Activated CD8-positive, alpha-beta T cell treated with anti-CD3 and anti-CD28 coated beads, Interleukin-2, amount 10 ng/mL, durations not matched to agents 7 days and 5 days (primary cell): ENCODE measurements at regions of chr2 and their contacts with region 1.

Region 1: GRCh38 chr2:201118121-201118960 is 2.4 kb downstream of the CFLAR start:
- DNase-seq: peak; percentile 93
- ATAC-seq: peak; percentile 45
- H3K4me3 Mint-ChIP-seq: peak overlapping the region; percentile 97
- H3K27ac Mint-ChIP-seq: peak overlapping the region; percentile 99
- H3K4me1 Mint-ChIP-seq: peaks cover 56% of the 10 kb centered on the region
- H3K27me3 Mint-ChIP-seq: no peaks in the 10 kb centered on the region

Region 2: GRCh38 chr2:200901459-200902072 is 216.8 kb before region 1 on chr2:
- CTCF ChIA-PET with region 1: interaction called, 10 read pairs
- POLR2A ChIA-PET with region 1: interaction called, 9 read pairs
- DNase-seq: peak; percentile 89
- ATAC-seq: peak; percentile 100
- H3K4me3 Mint-ChIP-seq: no peak overlapping the region
- H3K27ac Mint-ChIP-seq: peak overlapping the region; percentile 25
- H3K4me1 Mint-ChIP-seq: peaks cover 24% of the 10 kb centered on the region
- H3K27me3 Mint-ChIP-seq: no peaks in the 10 kb centered on the region

Region 3: DNA sequence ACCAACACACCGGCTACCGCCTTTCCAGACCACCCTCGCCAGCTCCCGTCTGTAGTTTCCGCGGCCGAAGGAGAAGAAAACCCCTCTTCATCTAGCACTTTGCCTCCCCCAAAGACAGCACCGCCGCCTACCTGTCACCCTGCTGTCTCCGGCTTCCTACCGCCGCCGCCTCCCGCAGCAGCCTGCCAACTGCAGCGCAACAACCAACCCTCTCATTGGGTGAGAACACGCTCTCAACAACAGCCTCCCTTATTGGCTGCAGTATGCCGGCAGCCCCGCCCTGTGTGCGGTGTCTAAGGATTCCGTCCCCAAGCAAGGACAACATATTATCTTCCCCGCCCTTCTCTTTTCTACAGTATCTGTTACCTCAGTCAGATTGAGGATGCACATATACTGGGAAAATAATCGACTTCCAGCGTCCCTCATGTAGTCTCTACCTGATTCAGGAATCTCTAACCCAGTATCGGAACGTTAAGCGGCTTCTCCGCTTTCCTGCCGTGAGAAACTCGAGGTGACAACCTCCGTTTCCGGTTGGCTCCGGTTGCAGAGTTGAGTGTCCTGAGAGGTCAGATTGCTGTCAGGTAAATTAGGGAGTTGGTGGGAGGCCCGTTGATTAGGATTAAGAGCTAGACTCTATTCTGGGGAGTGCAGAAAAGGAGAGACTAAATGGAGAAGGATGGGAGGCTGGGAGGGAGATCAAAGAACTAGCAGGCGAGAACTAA is 46.7 kb before region 1 on chr2 and contains the starts of genes HYCC2 and NDUFB3:
- CTCF ChIA-PET with region 1: no interaction called
- POLR2A ChIA-PET with region 1: interaction called, 70 read pairs
- DNase-seq: peak; percentile 96
- ATAC-seq: peak; percentile 97
- H3K4me3 Mint-ChIP-seq: peak within 1 kb of the TSS; percentile 89
- H3K27ac Mint-ChIP-seq: peak within 1 kb of the TSS; percentile 88
- H3K4me1 Mint-ChIP-seq: peaks cover 46% of the 10 kb centered on the region
- H3K27me3 Mint-ChIP-seq: no peaks in the 10 kb centered on the region
- total RNA-seq, gene HYCC2: 35.9 to 40.2 TPM
- total RNA-seq, gene NDUFB3: 167 to 173 TPM

Region 4: DNA sequence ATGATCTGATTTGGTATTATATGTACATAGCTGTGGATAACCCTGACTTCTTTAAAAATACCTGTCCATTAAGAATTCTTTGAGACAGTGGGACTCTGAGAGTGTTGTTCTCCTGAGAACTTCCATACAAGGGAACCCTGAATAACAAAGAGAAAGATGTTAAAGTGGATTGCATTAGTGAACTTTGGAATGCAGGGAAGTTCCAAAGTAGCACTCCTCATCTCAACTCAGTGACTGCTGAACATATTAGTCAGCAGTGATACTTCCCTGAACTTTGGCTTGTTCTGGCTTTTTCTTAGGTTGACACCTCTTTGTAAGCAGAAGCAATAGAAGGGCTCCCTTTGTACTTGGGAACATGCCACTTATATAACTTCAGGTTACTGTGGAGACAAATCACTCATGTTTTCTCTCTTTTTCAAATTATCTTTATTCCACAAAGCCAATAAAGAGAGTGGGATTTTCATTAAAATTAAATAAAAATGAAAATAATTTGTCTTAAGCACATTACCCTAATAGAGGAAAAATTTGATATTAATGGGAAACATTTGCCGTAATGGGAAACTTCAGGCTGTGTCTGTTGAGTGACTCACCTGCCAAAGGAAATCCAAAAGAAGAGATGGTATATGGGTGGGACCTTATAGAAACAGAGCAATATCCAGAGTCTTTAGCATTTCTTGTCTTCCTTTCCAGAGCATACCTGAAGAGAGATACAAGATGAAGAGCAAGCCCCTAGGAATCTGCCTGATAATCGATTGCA is 30.9 kb after region 1 on chr2:
- CTCF ChIA-PET with region 1: interaction called, 16 read pairs
- POLR2A ChIA-PET with region 1: interaction called, 13 read pairs
- DNase-seq: no peak
- ATAC-seq: no peak
- H3K4me3 Mint-ChIP-seq: no peak overlapping the region
- H3K27ac Mint-ChIP-seq: peak overlapping the region; percentile 7
- H3K4me1 Mint-ChIP-seq: peaks cover 20% of the 10 kb centered on the region
- H3K27me3 Mint-ChIP-seq: no peaks in the 10 kb centered on the region

Region 5: DNA sequence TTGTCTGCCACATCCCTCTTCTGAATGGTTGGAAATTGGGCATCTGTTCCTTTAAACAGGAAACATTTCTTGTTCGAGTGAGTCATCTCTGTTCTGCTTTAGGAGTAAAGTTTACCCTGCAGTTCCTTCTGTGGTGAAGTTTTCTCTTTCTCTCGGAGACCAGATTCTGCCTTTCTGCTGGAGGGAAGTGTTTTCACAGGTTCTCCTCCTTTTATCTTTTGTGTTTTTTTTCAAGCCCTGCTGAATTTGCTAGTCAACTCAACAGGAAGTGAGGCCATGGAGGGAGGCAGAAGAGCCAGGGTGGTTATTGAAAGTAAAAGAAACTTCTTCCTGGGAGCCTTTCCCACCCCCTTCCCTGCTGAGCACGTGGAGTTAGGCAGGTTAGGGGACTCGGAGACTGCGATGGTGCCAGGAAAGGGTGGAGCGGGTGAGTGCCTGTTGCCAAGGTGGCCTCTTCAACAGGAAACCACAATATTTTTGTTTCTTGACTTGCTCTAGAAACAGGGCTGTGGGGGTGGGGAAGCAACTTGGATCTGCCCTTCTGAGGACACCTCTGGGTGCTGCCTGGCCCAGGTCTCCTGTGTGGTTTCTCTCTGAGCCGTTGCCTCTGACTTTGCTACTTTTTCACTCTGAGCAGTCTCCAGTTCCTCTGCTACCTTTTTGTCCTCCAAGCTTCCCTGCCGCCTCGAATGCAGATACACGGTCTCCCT is 139.8 kb after region 1 on chr2:
- CTCF ChIA-PET with region 1: interaction called, 3 read pairs
- POLR2A ChIA-PET with region 1: interaction called, 36 read pairs
- DNase-seq: peak; percentile 98
- ATAC-seq: peak; percentile 71
- H3K4me3 Mint-ChIP-seq: peak overlapping the region; percentile 81
- H3K27ac Mint-ChIP-seq: peak overlapping the region; percentile 94
- H3K4me1 Mint-ChIP-seq: peaks cover 74% of the 10 kb centered on the region
- H3K27me3 Mint-ChIP-seq: no peaks in the 10 kb centered on the region

Region 6: GRCh38 chr2:201275990-201276389 is 157.6 kb after region 1 on chr2:
- CTCF ChIA-PET with region 1: no interaction called
- POLR2A ChIA-PET with region 1: no interaction called
- DNase-seq: no peak
- ATAC-seq: peak; percentile 27
- H3K4me3 Mint-ChIP-seq: no peak overlapping the region
- H3K27ac Mint-ChIP-seq: peak overlapping the region; percentile 12
- H3K4me1 Mint-ChIP-seq: peaks cover 31% of the 10 kb centered on the region
- H3K27me3 Mint-ChIP-seq: no peaks in the 10 kb centered on the region

Region 7: DNA sequence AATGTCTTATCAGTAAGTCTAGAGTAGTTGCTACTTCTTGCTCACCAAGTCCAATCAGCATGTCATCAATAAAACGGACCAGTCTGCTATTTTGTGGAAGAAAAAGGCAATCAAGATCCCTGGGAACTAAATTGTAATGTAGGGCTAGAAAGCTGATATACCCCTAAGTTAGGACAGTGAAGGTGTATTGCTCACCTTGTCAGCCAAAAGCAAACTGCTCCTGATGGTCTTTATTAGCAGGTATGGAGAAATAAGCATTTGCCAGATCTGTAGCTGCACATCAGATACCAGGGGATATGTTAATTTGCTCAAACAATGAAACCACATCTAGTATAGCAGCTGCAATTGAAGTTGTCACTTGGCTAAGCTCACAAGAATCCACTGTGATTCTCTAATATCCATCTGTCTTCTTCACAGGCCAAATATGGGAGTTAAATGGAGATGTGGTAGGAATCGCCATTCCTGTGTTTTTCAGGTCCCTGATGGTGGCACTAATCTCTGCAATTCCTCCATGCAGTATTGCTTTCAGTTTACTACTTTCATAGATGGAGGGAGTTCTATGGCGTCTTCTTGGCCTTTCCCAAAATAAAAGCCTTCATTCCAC is 450.0 kb after region 1 on chr2:
- CTCF ChIA-PET with region 1: no interaction called
- POLR2A ChIA-PET with region 1: no interaction called
- DNase-seq: no peak
- ATAC-seq: no peak
- H3K4me3 Mint-ChIP-seq: no peak overlapping the region
- H3K27ac Mint-ChIP-seq: no peak overlapping the region
- H3K4me1 Mint-ChIP-seq: peaks cover 5% of the 10 kb centered on the region
- H3K27me3 Mint-ChIP-seq: no peaks in the 10 kb centered on the region